Lower leg skin (tissue), 4 donors: ENCODE measurements at regions of chr5 and their contacts with region 1.

Region 1: GRCh38 chr5:79133657-79134451 is 22.2 kb downstream of the BHMT start:
- DNase-seq: peak; percentile 54 to 89
- H3K4me3 ChIP-seq: no peak overlapping the region
- CTCF ChIP-seq: peak in 1 of 3 donors; percentile 56
- POLR2A ChIP-seq: no peak

Region 2: GRCh38 chr5:79074641-79075040 is 59.2 kb before region 1 on chr5:
- intact Hi-C with region 1: no loop called
- DNase-seq: no peak
- H3K4me3 ChIP-seq: no peak overlapping the region
- CTCF ChIP-seq: no peak
- POLR2A ChIP-seq: no peak

Region 3: GRCh38 chr5:79464695-79465332 is 331.0 kb after region 1 on chr5:
- intact Hi-C with region 1: loop called (anchors 10 kb)
- DNase-seq: no peak
- H3K4me3 ChIP-seq: no peak overlapping the region
- CTCF ChIP-seq: no peak
- POLR2A ChIP-seq: no peak